H1 (cell line): ENCODE measurements at regions of chr3 and their contacts with region 1.

Region 1: DNA sequence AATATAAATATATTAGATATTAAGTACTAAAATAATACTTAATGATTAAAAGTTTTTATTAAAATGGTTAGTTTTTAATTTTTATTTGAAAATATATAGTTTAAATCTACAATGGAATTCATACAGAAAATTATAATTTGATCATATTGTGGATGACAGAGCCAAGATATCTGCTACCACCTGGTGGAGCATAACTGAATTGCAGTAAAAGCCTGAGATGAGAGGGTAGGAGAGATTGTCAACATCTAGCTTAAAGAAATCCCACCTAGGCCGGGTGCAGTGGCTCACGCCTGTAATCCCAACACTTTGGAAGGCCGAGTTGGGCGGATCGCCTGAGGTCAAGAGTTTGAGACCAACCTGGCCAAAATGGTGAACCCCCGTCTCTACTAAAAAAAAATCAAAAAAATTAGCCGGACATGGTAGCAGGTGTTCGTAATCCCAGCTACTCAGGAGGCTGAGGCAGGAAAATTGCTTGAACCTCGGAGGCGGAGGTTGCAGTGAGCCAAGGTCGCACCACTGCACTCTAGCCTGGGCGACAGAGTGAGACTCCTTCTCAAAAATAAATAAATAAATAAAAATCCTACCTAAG is 25.1 kb upstream of the CSTA start:
- DNase-seq: peak; percentile 5 to 59
- H3K4me3 ChIP-seq: no peak overlapping the region
- H3K27ac ChIP-seq: no peak overlapping the region
- H3K4me1 ChIP-seq: no peaks in the 10 kb centered on the region
- H3K27me3 ChIP-seq: no peaks in the 10 kb centered on the region
- CTCF ChIP-seq: peak in 2 of 3 experiments; percentile 47 to 68; a peak in 3 of 4 replicates
- EP300 ChIP-seq: no peak
- POLR2A ChIP-seq: no peak
- RAD21 ChIP-seq: peak; percentile 71 to 75

Region 2: GRCh38 chr3:122265957-122266356 is 34.0 kb before region 1 on chr3:
- CTCF ChIA-PET with region 1: interaction called, 12 read pairs
- POLR2A ChIA-PET with region 1: no interaction called
- DNase-seq: no peak
- H3K4me3 ChIP-seq: no peak overlapping the region
- H3K27ac ChIP-seq: no peak overlapping the region
- H3K4me1 ChIP-seq: peaks cover 0 to 2% (median 0%) of the 10 kb centered on the region in 4 experiments; a peak in 1 of 7 replicates
- H3K27me3 ChIP-seq: no peaks in the 10 kb centered on the region
- CTCF ChIP-seq: no peak
- EP300 ChIP-seq: no peak
- POLR2A ChIP-seq: no peak
- RAD21 ChIP-seq: no peak

Region 3: GRCh38 chr3:122283796-122284445 is 16.0 kb before region 1 on chr3:
- CTCF ChIA-PET with region 1: interaction called, 13 read pairs
- POLR2A ChIA-PET with region 1: no interaction called
- DNase-seq: no peak
- H3K4me3 ChIP-seq: no peak overlapping the region
- H3K27ac ChIP-seq: no peak overlapping the region
- H3K4me1 ChIP-seq: no peaks in the 10 kb centered on the region
- H3K27me3 ChIP-seq: no peaks in the 10 kb centered on the region
- CTCF ChIP-seq: no peak
- EP300 ChIP-seq: no peak
- POLR2A ChIP-seq: no peak
- RAD21 ChIP-seq: no peak

Region 4: DNA sequence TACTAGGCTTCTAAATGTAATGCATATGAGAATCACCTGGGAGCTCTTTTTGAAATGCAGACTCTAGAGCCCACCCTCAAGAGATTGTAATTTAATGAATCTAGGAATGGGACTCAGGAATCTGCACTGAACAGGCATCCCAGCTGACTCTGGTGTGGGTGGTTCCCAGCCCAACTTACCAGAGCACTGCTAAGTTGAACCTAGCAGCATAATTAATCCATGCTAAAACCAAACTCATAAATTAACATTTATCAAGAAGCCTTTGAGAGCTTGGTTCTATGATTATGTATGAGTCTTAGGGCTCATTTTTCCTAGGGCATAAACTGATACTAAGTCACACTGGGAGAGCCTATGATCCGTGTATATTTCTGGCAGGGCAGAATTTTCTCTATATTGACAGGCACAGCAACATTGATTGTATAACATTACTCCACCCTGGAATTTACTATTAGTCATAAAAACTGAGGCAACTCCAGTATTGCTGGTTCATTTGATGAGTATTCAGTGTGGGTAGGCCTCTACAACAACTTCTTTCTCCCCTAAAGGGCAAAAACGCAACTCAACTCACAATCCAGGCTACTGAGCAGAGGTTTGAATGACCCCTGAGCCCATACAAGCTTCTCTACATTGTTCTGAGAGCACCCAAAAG is 14.4 kb after region 1 on chr3:
- CTCF ChIA-PET with region 1: interaction called, 25 read pairs
- POLR2A ChIA-PET with region 1: no interaction called
- DNase-seq: no peak
- H3K4me3 ChIP-seq: no peak overlapping the region
- H3K27ac ChIP-seq: no peak overlapping the region
- H3K4me1 ChIP-seq: peaks cover 0 to 3% (median 1%) of the 10 kb centered on the region in 4 experiments; a peak in 3 of 7 replicates
- H3K27me3 ChIP-seq: no peaks in the 10 kb centered on the region; a peak in 1 of 7 replicates
- CTCF ChIP-seq: no peak
- EP300 ChIP-seq: no peak
- POLR2A ChIP-seq: no peak
- RAD21 ChIP-seq: no peak

Region 5: DNA sequence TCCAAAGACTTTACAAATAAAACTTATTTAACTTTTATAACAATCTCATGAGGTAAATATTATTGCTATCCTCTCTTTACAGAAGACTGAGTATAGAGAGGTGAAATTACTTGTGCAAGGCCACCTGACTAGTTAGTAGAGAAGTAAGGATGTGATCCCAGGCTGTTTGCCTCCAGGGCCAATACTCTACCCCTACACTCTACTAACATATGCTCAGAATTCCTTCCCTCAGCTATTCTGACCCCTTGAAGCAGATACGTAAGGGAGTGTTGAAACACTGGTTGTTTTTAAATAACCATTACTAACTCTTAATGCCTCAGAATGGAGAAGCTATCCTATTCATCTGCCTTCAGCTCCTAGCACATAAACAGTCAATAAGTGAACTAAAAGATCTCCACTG is 49.2 kb after region 1 on chr3:
- CTCF ChIA-PET with region 1: no interaction called
- POLR2A ChIA-PET with region 1: no interaction called
- DNase-seq: no peak
- H3K4me3 ChIP-seq: no peak overlapping the region
- H3K27ac ChIP-seq: no peak overlapping the region
- H3K4me1 ChIP-seq: no peaks in the 10 kb centered on the region
- H3K27me3 ChIP-seq: no peaks in the 10 kb centered on the region
- CTCF ChIP-seq: no peak
- EP300 ChIP-seq: no peak
- POLR2A ChIP-seq: no peak
- RAD21 ChIP-seq: no peak

Region 6: DNA sequence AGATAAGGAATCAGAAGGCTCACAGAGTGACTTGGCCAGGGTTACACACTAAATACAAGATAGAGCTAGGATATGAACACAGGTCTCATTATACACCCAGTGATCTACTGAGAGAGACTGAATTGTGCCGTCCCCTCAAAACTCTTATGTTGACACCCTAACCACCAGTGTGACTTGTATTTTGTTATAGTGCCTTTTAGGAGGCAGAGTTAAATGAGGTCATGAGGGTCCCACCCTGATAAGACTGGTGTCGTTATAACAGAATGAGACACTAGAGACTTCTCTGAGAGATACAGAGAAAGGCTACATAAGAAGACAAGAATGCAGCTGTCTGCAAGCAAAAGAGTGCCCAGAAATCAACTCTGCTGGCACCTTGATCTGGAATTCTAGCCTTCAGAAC is 202.2 kb after region 1 on chr3:
- CTCF ChIA-PET with region 1: no interaction called
- POLR2A ChIA-PET with region 1: no interaction called
- DNase-seq: no peak
- H3K4me3 ChIP-seq: no peak overlapping the region
- H3K27ac ChIP-seq: no peak overlapping the region
- H3K4me1 ChIP-seq: peaks cover 0 to 3% (median 0%) of the 10 kb centered on the region in 4 experiments; a peak in 3 of 7 replicates
- H3K27me3 ChIP-seq: no peaks in the 10 kb centered on the region
- CTCF ChIP-seq: no peak
- EP300 ChIP-seq: no peak
- POLR2A ChIP-seq: no peak
- RAD21 ChIP-seq: no peak